ENCODE measurements at regions of chr10 and their contacts with region 1.

Region 1: DNA sequence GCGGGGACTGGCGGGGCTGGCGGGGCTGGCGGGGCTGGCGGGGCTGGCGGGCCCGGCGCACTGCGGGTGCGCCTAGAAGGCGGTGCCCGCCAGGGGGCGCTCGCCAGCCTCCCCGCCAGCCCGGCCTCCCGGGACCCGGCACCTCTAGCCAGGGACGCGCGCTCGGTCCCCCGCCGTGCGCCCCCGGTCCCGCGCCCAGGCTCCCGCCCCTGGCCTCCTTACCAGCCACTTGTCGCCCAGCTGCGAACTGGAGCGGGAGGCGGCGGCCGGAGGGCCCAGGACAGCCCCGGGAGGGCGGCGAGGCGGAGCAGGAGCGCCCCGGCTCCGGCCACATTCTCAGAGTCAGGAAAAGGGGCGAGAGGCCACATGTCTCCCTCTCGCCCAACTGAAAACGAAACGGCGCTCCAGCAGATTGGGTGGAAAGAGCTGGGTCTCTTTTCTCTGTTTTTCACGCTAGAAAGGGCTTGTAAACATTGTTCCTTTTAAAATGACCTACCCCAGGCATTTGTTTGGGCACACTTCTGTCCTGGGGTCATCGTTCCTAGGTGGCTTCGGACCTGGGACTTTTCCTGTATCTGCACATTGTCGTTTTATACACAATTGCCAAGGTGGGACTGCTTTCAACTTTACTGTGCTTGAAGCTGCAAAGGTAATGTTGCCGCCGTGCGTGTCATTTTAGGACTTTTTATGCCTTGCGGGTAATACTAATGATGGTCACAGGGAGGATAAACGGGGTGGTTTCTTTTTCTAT is 378 bp upstream of the PRKCQ start:
- DNase-seq: peak; percentile 89
- H3K4me3 Mint-ChIP-seq: peak overlapping the region; percentile 90
- H3K27ac Mint-ChIP-seq: peak overlapping the region; percentile 96
- H3K4me1 Mint-ChIP-seq: peaks cover 55% of the 10 kb centered on the region
- H3K27me3 Mint-ChIP-seq: no peaks in the 10 kb centered on the region

Region 2: GRCh38 chr10:6050801-6051445 is 529.5 kb before region 1 on chr10:
- CTCF ChIA-PET with region 1: no interaction called
- POLR2A ChIA-PET with region 1: interaction called, 3 read pairs
- intact Hi-C with region 1: loop called (anchors 5 kb)
- DNase-seq: peak; percentile 97
- H3K4me3 Mint-ChIP-seq: peak overlapping the region; percentile 83
- H3K27ac Mint-ChIP-seq: peak overlapping the region; percentile 98
- H3K4me1 Mint-ChIP-seq: peaks cover 86% of the 10 kb centered on the region
- H3K27me3 Mint-ChIP-seq: no peaks in the 10 kb centered on the region

Region 3: GRCh38 chr10:6445501-6446316 is 134.7 kb before region 1 on chr10:
- CTCF ChIA-PET with region 1: interaction called, 12 read pairs
- POLR2A ChIA-PET with region 1: no interaction called
- intact Hi-C with region 1: no loop called
- DNase-seq: peak; percentile 76
- H3K4me3 Mint-ChIP-seq: no peak overlapping the region
- H3K27ac Mint-ChIP-seq: peak overlapping the region; percentile 58
- H3K4me1 Mint-ChIP-seq: peaks cover 39% of the 10 kb centered on the region
- H3K27me3 Mint-ChIP-seq: no peaks in the 10 kb centered on the region

Region 4: DNA sequence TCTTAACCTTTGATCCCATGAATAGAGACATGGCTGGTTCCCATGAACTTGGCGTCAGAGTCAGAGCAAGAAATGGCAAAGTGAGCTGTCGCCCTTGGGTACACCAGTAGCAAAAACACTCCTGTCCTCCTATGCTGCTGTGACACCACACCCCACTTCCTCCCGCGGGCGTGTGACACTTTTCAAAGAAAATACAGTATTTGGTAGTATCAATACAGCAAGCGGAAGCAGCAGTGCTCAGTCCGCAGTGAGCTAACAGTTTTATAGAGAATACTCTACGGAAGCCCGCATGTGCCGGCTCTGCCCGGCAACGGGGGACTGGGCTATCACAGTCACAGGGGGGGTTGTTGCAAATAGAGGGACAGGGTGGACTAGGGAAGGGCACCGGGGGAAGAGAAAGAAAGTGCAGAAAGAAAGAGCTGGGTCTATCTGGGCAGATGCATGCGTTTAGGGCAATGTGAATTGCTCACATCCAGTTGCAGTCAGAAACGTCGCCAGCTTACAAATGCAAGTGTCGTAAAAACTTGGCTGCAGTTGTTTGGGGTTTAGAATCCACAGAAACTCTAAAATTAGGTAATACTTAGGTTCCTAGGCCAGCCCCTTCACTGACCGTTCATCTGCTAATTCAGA is 50.1 kb before region 1 on chr10:
- CTCF ChIA-PET with region 1: interaction called, 7 read pairs
- POLR2A ChIA-PET with region 1: interaction called, 3 read pairs
- intact Hi-C with region 1: loop called (anchors 1 kb)
- DNase-seq: peak; percentile 91
- H3K4me3 Mint-ChIP-seq: peak overlapping the region; percentile 82
- H3K27ac Mint-ChIP-seq: peak overlapping the region; percentile 98
- H3K4me1 Mint-ChIP-seq: peaks cover 88% of the 10 kb centered on the region
- H3K27me3 Mint-ChIP-seq: no peaks in the 10 kb centered on the region

Region 5: GRCh38 chr10:6593241-6593671 is 12.8 kb after region 1 on chr10:
- CTCF ChIA-PET with region 1: interaction called, 35 read pairs
- POLR2A ChIA-PET with region 1: interaction called, 33 read pairs
- intact Hi-C with region 1: loop called (anchors 1 kb)
- DNase-seq: peak; percentile 44
- H3K4me3 Mint-ChIP-seq: peak overlapping the region; percentile 14
- H3K27ac Mint-ChIP-seq: peak overlapping the region; percentile 72
- H3K4me1 Mint-ChIP-seq: peaks cover 90% of the 10 kb centered on the region
- H3K27me3 Mint-ChIP-seq: no peaks in the 10 kb centered on the region

Region 6: GRCh38 chr10:6619660-6620059 is 39.2 kb after region 1 on chr10:
- CTCF ChIA-PET with region 1: interaction called, 4 read pairs
- POLR2A ChIA-PET with region 1: interaction called, 3 read pairs
- intact Hi-C with region 1: loop called (anchors 5 kb)
- DNase-seq: no peak
- H3K4me3 Mint-ChIP-seq: no peak overlapping the region
- H3K27ac Mint-ChIP-seq: no peak overlapping the region
- H3K4me1 Mint-ChIP-seq: peaks cover 56% of the 10 kb centered on the region
- H3K27me3 Mint-ChIP-seq: no peaks in the 10 kb centered on the region

Region 7: DNA sequence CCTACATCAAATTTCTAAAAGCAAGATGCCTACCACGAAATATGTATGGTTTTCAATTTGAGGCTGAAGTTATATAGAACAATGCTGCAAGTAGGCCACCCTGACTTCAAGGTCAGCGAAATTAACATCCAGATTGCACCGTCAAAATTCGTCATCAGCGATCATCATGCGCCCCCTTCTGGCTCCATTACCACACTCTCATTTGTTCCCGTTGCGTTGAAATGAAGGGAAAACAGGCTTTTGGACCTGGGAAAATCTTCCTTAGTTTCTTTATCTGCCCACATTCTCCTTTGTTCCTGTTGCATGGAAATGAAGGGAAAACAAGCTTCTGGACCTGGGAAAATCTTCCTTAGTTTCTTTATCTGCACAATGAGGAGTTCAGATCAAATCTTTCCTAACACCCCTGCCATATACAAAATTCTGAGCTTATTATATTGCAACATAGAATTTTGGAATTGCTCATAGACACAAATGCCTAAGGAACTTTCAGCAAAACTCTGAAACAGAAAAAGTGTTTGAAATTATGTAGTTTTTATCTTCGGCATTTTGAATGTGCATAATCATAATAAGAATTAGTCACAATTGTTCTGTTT is 97.9 kb after region 1 on chr10:
- CTCF ChIA-PET with region 1: interaction called, 14 read pairs
- POLR2A ChIA-PET with region 1: no interaction called
- intact Hi-C with region 1: no loop called
- DNase-seq: peak; percentile 76
- H3K4me3 Mint-ChIP-seq: no peak overlapping the region
- H3K27ac Mint-ChIP-seq: no peak overlapping the region
- H3K4me1 Mint-ChIP-seq: peaks cover 4% of the 10 kb centered on the region
- H3K27me3 Mint-ChIP-seq: peaks cover 6% of the 10 kb centered on the region